ENCODE measurements at regions of chr5 and their contacts with region 1.

Region 1: GRCh38 chr5:170315154-170315553 is 17.6 kb upstream of the LCP2 start:
- DNase-seq: peak; percentile 94

Region 2: DNA sequence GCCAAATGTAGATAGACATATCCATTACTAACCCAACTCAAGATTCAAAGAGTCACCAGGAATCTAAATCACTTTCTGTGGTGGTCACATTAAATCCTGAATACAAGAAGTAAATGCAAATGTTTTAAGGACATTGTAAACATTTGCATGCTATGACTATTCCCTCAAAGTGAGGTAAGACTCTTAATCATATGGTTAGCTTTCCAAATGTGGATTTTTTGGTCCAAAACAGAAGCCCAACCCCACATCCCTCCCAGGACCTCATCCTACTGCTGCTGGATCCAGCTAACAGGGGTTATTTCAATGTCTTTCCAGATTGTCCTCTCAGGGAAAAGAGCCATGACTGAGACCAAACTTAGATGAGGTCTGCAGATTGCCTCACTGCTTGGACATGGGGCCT is 1507.9 kb before region 1 on chr5:
- intact Hi-C with region 1: loop called in 1 of 2 experiments (anchors 5 kb)
- DNase-seq: no peak

Measured in posterior vena cava (tissue), 2 donors.